IMR-90 (cell line): ENCODE measurements at regions of chr7 and their contacts with region 1.

Region 1: GRCh38 chr7:54839538-54840213 is 80.7 kb upstream of the SEC61G start:
- DNase-seq: peak; percentile 56
- ATAC-seq: peak; percentile 90
- H3K4me3 ChIP-seq: no peak overlapping the region
- H3K27ac ChIP-seq: no peak overlapping the region
- H3K4me1 ChIP-seq: peaks cover 10% of the 10 kb centered on the region
- H3K27me3 ChIP-seq: no peaks in the 10 kb centered on the region
- CTCF ChIP-seq: peak; percentile 58
- POLR2A ChIP-seq: no peak
- RAD21 ChIP-seq: peak; percentile 70

Region 2: GRCh38 chr7:55018361-55019190 is 178.9 kb after region 1 on chr7 and contains the start of gene EGFR:
- CTCF ChIA-PET with region 1: interaction called, 6 read pairs
- POLR2A ChIA-PET with region 1: no interaction called
- dilution Hi-C with region 1: no loop called
- in situ Hi-C with region 1: no loop called
- intact Hi-C with region 1: loop called (anchors 5 kb)
- DNase-seq: peak; percentile 80
- ATAC-seq: peak; percentile 94
- H3K4me3 ChIP-seq: peak within 1 kb of the TSS; percentile 98
- H3K27ac ChIP-seq: peak within 1 kb of the TSS; percentile 97
- H3K4me1 ChIP-seq: peaks cover 13% of the 10 kb centered on the region
- H3K27me3 ChIP-seq: no peaks in the 10 kb centered on the region
- CTCF ChIP-seq: no peak
- POLR2A ChIP-seq: peak; percentile 77
- RAD21 ChIP-seq: no peak
- total RNA-seq, gene EGFR: 60.4 and 63.9 TPM in 2 replicates

Region 3: DNA sequence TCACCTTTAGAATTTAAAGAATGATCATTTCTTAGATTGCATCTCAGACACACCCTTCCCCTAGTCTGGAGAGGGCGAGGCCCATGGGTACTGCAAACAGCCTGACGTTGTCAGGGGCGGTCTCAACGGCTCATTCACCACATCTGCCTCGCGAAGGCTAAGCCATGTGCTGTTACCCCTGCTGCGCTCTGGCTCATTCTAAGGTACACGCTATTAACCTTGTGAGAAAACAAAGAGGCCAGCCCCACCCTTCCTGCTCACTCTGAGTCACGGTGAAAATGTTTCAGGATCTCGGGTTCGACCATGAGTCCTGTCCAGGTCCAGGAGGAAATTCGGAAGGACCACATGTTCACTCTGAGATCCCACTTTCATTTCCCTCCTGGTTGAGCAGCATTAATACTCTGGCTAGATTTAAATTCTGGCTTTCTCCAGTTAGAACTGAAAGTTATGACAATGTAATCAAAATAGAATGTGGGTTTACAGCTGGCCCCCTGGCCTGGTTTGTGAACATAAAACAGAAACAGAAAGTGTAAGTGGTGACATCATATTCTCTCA is 234.3 kb after region 1 on chr7:
- CTCF ChIA-PET with region 1: no interaction called
- POLR2A ChIA-PET with region 1: no interaction called
- dilution Hi-C with region 1: no loop called
- in situ Hi-C with region 1: no loop called
- intact Hi-C with region 1: no loop called
- DNase-seq: peak; percentile 79
- ATAC-seq: peak; percentile 43
- H3K4me3 ChIP-seq: peak overlapping the region; percentile 22; the same call in 1 of the 2 replicates
- H3K27ac ChIP-seq: peak overlapping the region; percentile 74
- H3K4me1 ChIP-seq: peaks cover 31% of the 10 kb centered on the region
- H3K27me3 ChIP-seq: no peaks in the 10 kb centered on the region
- CTCF ChIP-seq: no peak
- POLR2A ChIP-seq: no peak; the same call in 1 of the 2 replicates
- RAD21 ChIP-seq: no peak

Region 4: DNA sequence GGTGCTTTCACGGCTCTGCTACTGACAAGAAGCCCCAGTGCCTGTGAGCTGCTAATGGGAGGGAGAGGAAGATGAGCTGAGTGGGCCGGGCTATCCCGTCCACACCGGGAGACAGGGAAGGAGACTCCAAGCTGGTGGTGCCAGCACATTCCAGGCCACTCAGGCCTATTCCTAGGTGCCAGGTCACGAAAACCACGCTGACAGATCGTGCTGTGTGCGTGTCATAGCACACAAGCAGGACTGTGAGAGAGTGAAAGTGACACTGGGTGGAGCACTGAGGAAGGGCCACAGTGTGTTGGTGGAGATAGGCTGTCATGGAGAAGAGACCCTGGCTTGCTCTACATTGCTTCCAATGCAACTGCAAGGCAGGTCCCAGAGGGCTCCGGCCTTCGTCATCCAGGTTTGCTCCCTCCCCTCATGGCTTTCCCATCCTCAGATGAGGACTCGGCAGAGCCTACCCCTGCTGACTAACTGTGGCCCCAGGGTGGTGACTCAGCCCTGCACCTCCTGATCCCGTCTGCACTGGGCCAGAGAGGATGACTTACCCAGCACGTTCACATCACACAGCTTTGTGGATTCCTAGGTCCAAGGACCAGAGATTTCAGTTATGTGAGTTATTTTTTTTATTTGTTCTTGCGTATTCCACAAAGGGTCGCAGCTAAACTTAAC is 346.4 kb after region 1 on chr7:
- CTCF ChIA-PET with region 1: no interaction called
- POLR2A ChIA-PET with region 1: no interaction called
- dilution Hi-C with region 1: no loop called
- in situ Hi-C with region 1: no loop called
- intact Hi-C with region 1: no loop called
- DNase-seq: peak; percentile 96
- ATAC-seq: peak; percentile 92
- H3K4me3 ChIP-seq: no peak overlapping the region
- H3K27ac ChIP-seq: peak overlapping the region; percentile 73
- H3K4me1 ChIP-seq: peaks cover 26% of the 10 kb centered on the region
- H3K27me3 ChIP-seq: no peaks in the 10 kb centered on the region
- CTCF ChIP-seq: no peak
- POLR2A ChIP-seq: no peak
- RAD21 ChIP-seq: peak; percentile 14; the same call in 1 of the 2 replicates